IMR-90 (cell line): ENCODE measurements at regions of chr1 and their contacts with region 1.

Region 1: GRCh38 chr1:53238197-53239155 is at the start of gene MAGOH:
- DNase-seq: peak; percentile 96
- ATAC-seq: peak; percentile 98
- H3K4me3 ChIP-seq: peak within 1 kb of the TSS; percentile 87
- H3K27ac ChIP-seq: peak within 1 kb of the TSS; percentile 74
- H3K4me1 ChIP-seq: peaks cover 8% of the 10 kb centered on the region
- H3K27me3 ChIP-seq: no peaks in the 10 kb centered on the region
- CTCF ChIP-seq: no peak
- POLR2A ChIP-seq: peak; percentile 75
- RAD21 ChIP-seq: peak; percentile 1; the same call in 1 of the 2 replicates
- total RNA-seq, gene MAGOH: 3.8 and 26.4 TPM in 2 replicates

Region 2: DNA sequence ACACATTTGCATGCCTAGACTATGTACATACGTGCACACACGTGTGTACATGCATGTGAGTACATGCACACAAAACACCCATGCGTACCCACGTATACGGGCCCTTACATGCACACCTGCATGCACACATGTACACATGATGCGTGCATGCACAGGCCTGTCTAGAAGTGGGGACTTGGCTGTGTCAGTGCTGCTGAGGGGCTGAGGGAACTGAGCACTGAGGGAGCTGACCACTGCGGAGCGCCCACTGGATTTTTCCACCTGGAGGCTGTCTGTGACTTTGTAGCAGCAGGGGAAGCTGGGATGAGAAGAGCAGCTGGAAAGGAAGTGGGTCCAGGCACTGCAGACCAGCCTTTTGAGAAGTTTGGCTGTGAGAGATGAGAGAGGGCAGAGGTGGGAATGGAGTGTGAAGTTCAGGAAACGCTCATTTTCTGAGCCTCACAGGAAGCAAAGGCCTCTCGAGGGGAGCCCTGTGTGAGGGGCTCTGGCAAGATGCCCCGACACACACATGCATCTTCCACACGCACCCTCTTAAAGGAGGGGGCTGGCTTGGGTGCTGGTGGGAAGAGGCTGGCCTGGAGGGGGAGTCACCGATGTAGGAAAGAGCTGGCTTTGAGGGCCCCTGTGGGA is 155.5 kb before region 1 on chr1:
- CTCF ChIA-PET with region 1: no interaction called
- POLR2A ChIA-PET with region 1: interaction called, 18 read pairs
- dilution Hi-C with region 1: no loop called
- in situ Hi-C with region 1: no loop called
- intact Hi-C with region 1: no loop called
- DNase-seq: no peak
- ATAC-seq: no peak
- H3K4me3 ChIP-seq: no peak overlapping the region
- H3K27ac ChIP-seq: no peak overlapping the region
- H3K4me1 ChIP-seq: peaks cover 7% of the 10 kb centered on the region; the same call in 1 of the 2 replicates
- H3K27me3 ChIP-seq: no peaks in the 10 kb centered on the region
- CTCF ChIP-seq: no peak
- POLR2A ChIP-seq: no peak
- RAD21 ChIP-seq: no peak

Region 3: GRCh38 chr1:53220171-53220961 is 18.1 kb before region 1 on chr1 and contains the start of gene CZIB:
- CTCF ChIA-PET with region 1: no interaction called
- POLR2A ChIA-PET with region 1: interaction called, 25 read pairs
- dilution Hi-C with region 1: no loop called
- in situ Hi-C with region 1: no loop called
- intact Hi-C with region 1: no loop called
- DNase-seq: peak; percentile 88
- ATAC-seq: peak; percentile 98
- H3K4me3 ChIP-seq: peak within 1 kb of the TSS; percentile 98
- H3K27ac ChIP-seq: peak within 1 kb of the TSS; percentile 100
- H3K4me1 ChIP-seq: peaks cover 8% of the 10 kb centered on the region
- H3K27me3 ChIP-seq: no peaks in the 10 kb centered on the region
- CTCF ChIP-seq: no peak
- POLR2A ChIP-seq: peak; percentile 95
- RAD21 ChIP-seq: no peak
- total RNA-seq, gene CZIB: 37.5 and 41.0 TPM in 2 replicates